ENCODE measurements at regions of chr17 and their contacts with region 1.

Region 1: GRCh38 chr17:4986951-4987766 is at the start of gene CAMTA2:
- DNase-seq: peak; percentile 62 to 95
- H3K4me3 ChIP-seq: peak within 1 kb of the TSS; percentile 86 to 91
- H3K27ac ChIP-seq: peak within 1 kb of the TSS; percentile 91 to 95
- H3K4me1 ChIP-seq: peaks cover 0 to 22% of the 10 kb centered on the region in 2 donors
- H3K27me3 ChIP-seq: no peaks in the 10 kb centered on the region
- CTCF ChIP-seq: peak; percentile 80 to 91 (median 87)
- total RNA-seq, gene CAMTA2: 72.1 TPM

Region 2: GRCh38 chr17:4908301-4908700 is 78.9 kb before region 1 on chr17:
- intact Hi-C with region 1: loop called (anchors 5 kb)
- DNase-seq: no peak
- H3K4me3 ChIP-seq: no peak overlapping the region
- H3K27ac ChIP-seq: peak overlapping the region in 1 of 2 donors; percentile 49
- H3K4me1 ChIP-seq: peaks cover 0 to 8% of the 10 kb centered on the region in 2 donors
- H3K27me3 ChIP-seq: no peaks in the 10 kb centered on the region
- CTCF ChIP-seq: no peak

Region 3: GRCh38 chr17:4997302-4998026 is 10.3 kb after region 1 on chr17 and contains the starts of genes INCA1 and KIF1C:
- intact Hi-C with region 1: loop called (anchors 1 kb)
- DNase-seq: peak; percentile 56 to 95
- H3K4me3 ChIP-seq: peak within 1 kb of the TSS; percentile 80 to 99
- H3K27ac ChIP-seq: peak within 1 kb of the TSS; percentile 94 to 95
- H3K4me1 ChIP-seq: peaks cover 6 to 17% of the 10 kb centered on the region in 2 donors
- H3K27me3 ChIP-seq: no peaks in the 10 kb centered on the region
- CTCF ChIP-seq: peak in 2 of 3 experiments; percentile 12 to 42
- total RNA-seq, gene INCA1: not detected
- total RNA-seq, gene KIF1C: 94.0 TPM